Activated CD8-positive, alpha-beta T cell treated with anti-CD3 and anti-CD28 coated beads for 36 hours (primary cell): ENCODE measurements at regions of chr2 and their contacts with region 1.

Region 1: DNA sequence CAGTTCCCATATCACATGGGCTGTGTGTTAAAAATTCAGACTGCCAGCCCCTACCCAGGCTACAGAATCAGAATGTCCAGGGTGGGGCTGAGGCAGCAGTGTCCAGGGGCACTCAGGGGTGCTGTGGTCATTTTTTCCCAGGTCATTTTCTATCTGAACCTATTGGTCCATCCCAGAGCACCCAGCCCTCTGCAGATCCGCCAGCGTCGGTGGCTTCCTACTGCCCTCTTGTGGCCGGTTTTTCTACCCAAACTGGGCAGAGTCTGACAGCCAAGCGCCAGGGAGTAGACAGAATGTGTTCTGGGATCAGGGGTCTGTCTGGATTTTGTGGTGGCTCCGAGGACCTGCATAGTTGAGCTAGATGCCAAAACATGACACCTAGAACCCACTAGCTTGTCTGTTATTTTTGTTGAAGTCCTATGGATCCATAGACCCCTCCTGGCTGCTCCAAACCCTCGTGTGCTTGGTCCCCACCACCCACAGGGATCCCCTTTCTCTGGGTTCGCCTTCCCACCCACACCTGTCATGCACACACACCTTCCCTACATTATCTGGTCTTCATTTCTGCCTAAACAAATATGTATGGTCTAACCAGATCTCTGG is 34.1 kb upstream of the RMDN2 start:
- DNase-seq: peak; percentile 77
- ATAC-seq: peak; percentile 77
- H3K4me3 Mint-ChIP-seq: no peak overlapping the region
- H3K27ac Mint-ChIP-seq: no peak overlapping the region
- H3K4me1 Mint-ChIP-seq: peaks cover 36% of the 10 kb centered on the region
- H3K27me3 Mint-ChIP-seq: peaks cover 3% of the 10 kb centered on the region
- CTCF ChIP-seq: peak; percentile 87

Region 2: GRCh38 chr2:37923308-37924055 is 32.5 kb after region 1 on chr2:
- CTCF ChIA-PET with region 1: interaction called, 10 read pairs
- POLR2A ChIA-PET with region 1: no interaction called
- intact Hi-C with region 1: no loop called
- DNase-seq: no peak
- ATAC-seq: no peak
- H3K4me3 Mint-ChIP-seq: no peak overlapping the region
- H3K27ac Mint-ChIP-seq: no peak overlapping the region
- H3K4me1 Mint-ChIP-seq: peaks cover 13% of the 10 kb centered on the region
- H3K27me3 Mint-ChIP-seq: peaks cover 5% of the 10 kb centered on the region
- CTCF ChIP-seq: no peak